Left cardiac atrium (tissue), 4 donors: ENCODE measurements at regions of chr1 and their contacts with region 1.

Region 1: GRCh38 chr1:32521165-32521564 is 18.1 kb upstream of the ZBTB8A start:
- DNase-seq: no peak
- ATAC-seq: no peak

Region 2: GRCh38 chr1:32247983-32248889 is 272.9 kb before region 1 on chr1:
- intact Hi-C with region 1: no loop called
- DNase-seq: peak; percentile 90
- ATAC-seq: peak; percentile 56 to 79

Region 3: DNA sequence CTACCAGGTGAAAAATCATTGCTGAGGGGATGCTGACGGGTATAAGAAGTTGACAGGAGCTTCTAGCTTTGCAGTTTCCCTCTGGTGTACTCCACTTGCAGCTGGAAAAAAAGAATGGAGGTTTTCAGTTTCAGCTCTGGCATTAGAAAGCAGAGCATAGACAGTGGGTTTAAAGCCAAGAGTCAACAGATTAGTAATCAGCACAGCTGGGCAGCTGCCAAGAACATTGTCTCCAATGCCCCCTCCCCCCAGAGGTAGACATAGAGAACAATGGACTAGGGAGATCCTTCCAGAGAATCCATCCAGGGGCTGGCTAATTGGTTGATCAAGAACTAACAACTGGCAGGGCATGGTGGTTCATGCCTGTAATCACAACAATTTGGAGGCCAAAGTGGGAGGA is 66.4 kb before region 1 on chr1:
- intact Hi-C with region 1: loop called in 1 of 2 experiments (anchors 10 kb)
- DNase-seq: peak; percentile 68
- ATAC-seq: peak; percentile 30 to 39

Region 4: GRCh38 chr1:32464716-32465577 is 56.2 kb before region 1 on chr1 and contains the start of gene ZBTB8B:
- intact Hi-C with region 1: no loop called
- DNase-seq: peak; percentile 81
- ATAC-seq: peak; percentile 98
- total RNA-seq, gene ZBTB8B: 0.03 TPM in 1 of 2 donors, not detected in the other

Region 5: DNA sequence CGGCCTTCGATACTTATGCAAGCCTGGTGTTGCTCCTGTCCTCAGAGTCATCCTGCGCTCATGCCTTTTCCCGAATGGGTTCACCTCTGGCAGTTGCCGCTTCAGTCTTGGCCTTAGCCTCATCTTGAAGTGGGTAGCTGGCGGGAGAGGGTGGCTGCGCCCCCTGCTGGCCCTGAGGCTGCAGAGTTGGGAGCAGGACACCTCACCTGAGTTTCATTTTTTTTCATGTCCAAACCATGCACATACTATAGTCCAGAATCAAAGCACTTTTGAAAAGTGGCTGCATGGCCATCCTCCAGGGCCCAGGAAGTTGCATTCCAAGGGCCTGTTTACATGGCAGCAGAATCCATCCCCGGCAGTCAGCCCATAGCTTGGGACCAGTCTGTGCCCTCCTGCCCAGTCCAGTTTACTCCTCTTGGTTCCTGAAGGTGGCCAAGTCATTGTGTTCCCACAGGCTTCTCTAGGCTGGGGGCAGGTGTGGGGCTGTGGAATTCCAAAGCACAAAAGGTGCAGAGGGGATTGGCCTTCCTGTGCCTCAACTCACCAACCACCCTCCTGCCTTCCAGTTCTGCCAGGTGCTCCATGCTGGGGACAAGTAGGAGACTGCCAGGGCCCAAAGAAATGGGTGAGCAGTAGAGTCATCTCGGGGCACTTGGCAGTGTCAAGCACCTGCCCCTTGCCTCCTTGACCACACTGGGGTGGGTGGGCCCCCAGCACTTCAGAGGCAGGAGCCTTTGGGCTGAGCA is 252.0 kb after region 1 on chr1:
- intact Hi-C with region 1: loop called in 1 of 2 experiments (anchors 10 kb)
- DNase-seq: peak; percentile 83
- ATAC-seq: peak; percentile 76 to 88